Heart left ventricle (tissue), 16 donors: ENCODE measurements at regions of chr4 and their contacts with region 1.

Region 1: DNA sequence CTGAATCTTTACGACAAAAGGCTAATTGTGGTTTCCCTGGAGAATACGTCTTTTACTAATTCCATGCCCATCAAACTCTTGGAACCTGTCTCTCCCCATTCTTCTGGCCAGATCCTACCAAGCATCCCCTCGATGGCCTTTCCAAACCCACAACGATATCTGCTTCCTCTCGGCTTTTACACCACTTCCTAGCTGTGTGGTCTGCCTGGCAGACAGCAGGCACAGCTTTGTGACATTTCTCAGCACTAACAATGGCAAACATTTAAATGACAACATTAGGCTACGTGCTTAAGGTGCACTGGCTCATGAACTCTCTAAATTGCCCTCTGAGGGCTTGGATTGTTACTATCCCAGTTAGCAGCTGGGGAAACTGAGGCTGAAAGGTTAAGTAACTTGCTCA is 141.0 kb downstream of the NSUN7 start:
- DNase-seq: no peak
- ATAC-seq: no peak
- H3K4me3 ChIP-seq: no peak overlapping the region
- H3K27ac ChIP-seq: no peak overlapping the region
- H3K4me1 ChIP-seq: peaks cover 0 to 5% (median 0%) of the 10 kb centered on the region in 12 donors
- H3K27me3 ChIP-seq: no peaks in the 10 kb centered on the region
- CTCF ChIP-seq: no peak
- POLR2A ChIP-seq: no peak

Region 2: GRCh38 chr4:40731792-40732245 is 158.9 kb before region 1 on chr4:
- intact Hi-C with region 1: loop called in 8 of 10 experiments (anchors 5 to 10 kb)
- DNase-seq: peak; percentile 37 to 63 (median 44)
- ATAC-seq: peak; percentile 60 to 82 (median 74)
- H3K4me3 ChIP-seq: no peak overlapping the region
- H3K27ac ChIP-seq: peak overlapping the region in 5 of 12 donors; percentile 33 to 92 (median 60)
- H3K4me1 ChIP-seq: peaks cover 0 to 35% (median 0%) of the 10 kb centered on the region in 12 donors
- H3K27me3 ChIP-seq: no peaks in the 10 kb centered on the region
- CTCF ChIP-seq: no peak
- POLR2A ChIP-seq: no peak

Region 3: GRCh38 chr4:40846532-40846931 is 44.2 kb before region 1 on chr4:
- intact Hi-C with region 1: loop called in 5 of 10 experiments (anchors 2 to 10 kb)
- DNase-seq: no peak
- ATAC-seq: no peak
- H3K4me3 ChIP-seq: no peak overlapping the region
- H3K27ac ChIP-seq: no peak overlapping the region
- H3K4me1 ChIP-seq: peaks cover 0 to 21% (median 6%) of the 10 kb centered on the region in 12 donors
- H3K27me3 ChIP-seq: no peaks in the 10 kb centered on the region
- CTCF ChIP-seq: no peak
- POLR2A ChIP-seq: no peak